CD4-positive, alpha-beta T cell (primary cell): ENCODE measurements at regions of chr3 and their contacts with region 1.

Region 1: GRCh38 chr3:152356870-152357276 is 88.1 kb downstream of the MBNL1 start:
- DNase-seq: peak in 1 of 14 experiments; percentile 35
- ATAC-seq: peak; percentile 50
- H3K4me3 ChIP-seq: no peak overlapping the region
- H3K4me3 Mint-ChIP-seq: peak overlapping the region; percentile 18
- H3K27ac ChIP-seq: no peak overlapping the region
- H3K27ac Mint-ChIP-seq: peak overlapping the region; percentile 45
- H3K4me1 ChIP-seq: peaks cover 30% of the 10 kb centered on the region
- H3K4me1 Mint-ChIP-seq: peaks cover 85% of the 10 kb centered on the region
- H3K27me3 ChIP-seq: no peaks in the 10 kb centered on the region
- H3K27me3 Mint-ChIP-seq: no peaks in the 10 kb centered on the region
- CTCF ChIP-seq: no peak

Region 2: DNA sequence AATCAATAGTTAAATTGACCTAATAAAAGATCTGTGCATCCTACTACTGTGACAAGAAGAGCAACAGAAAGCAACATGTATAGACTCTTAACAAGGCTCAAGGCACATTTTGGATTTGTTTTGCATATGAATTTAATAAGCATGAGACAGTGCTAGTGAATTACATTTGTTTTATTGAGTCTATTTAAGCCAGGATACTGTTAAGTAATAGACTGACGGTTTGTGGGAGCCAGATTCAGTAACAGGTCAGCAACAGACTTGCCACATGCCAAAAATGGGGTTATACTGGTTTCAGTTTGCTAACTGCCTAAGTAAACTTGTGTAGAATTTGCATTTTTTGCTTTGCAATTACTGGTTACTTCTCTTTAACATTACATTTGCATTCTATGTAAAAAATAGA is 34.1 kb before region 1 on chr3:
- CTCF ChIA-PET with region 1: no interaction called
- POLR2A ChIA-PET with region 1: no interaction called
- intact Hi-C with region 1: no loop called
- DNase-seq: peak in 3 of 14 experiments; percentile 43 to 65 (median 44)
- ATAC-seq: no peak
- H3K4me3 ChIP-seq: no peak overlapping the region
- H3K4me3 Mint-ChIP-seq: peak overlapping the region; percentile 62
- H3K27ac ChIP-seq: peak overlapping the region in 1 of 2 donors; percentile 20
- H3K27ac Mint-ChIP-seq: peak overlapping the region; percentile 91
- H3K4me1 ChIP-seq: peaks cover 9% of the 10 kb centered on the region
- H3K4me1 Mint-ChIP-seq: peaks cover 90% of the 10 kb centered on the region
- H3K27me3 ChIP-seq: no peaks in the 10 kb centered on the region
- H3K27me3 Mint-ChIP-seq: no peaks in the 10 kb centered on the region
- CTCF ChIP-seq: no peak

Region 3: GRCh38 chr3:152376351-152377183 is 19.7 kb after region 1 on chr3:
- CTCF ChIA-PET with region 1: interaction called, 3 read pairs
- POLR2A ChIA-PET with region 1: interaction called, 7 read pairs
- intact Hi-C with region 1: loop called in 1 of 2 experiments (anchors 1 kb)
- DNase-seq: peak in 3 of 14 experiments; percentile 28 to 65 (median 53)
- ATAC-seq: no peak
- H3K4me3 ChIP-seq: no peak overlapping the region
- H3K4me3 Mint-ChIP-seq: peak overlapping the region; percentile 36
- H3K27ac ChIP-seq: no peak overlapping the region
- H3K27ac Mint-ChIP-seq: peak overlapping the region; percentile 84
- H3K4me1 ChIP-seq: peaks cover 41% of the 10 kb centered on the region
- H3K4me1 Mint-ChIP-seq: peaks cover 95% of the 10 kb centered on the region
- H3K27me3 ChIP-seq: no peaks in the 10 kb centered on the region
- H3K27me3 Mint-ChIP-seq: no peaks in the 10 kb centered on the region
- CTCF ChIP-seq: no peak

Region 4: GRCh38 chr3:152402695-152403451 is 46.0 kb after region 1 on chr3:
- CTCF ChIA-PET with region 1: interaction called, 3 read pairs
- POLR2A ChIA-PET with region 1: interaction called, 4 read pairs
- intact Hi-C with region 1: loop called in 1 of 2 experiments (anchors 5 kb)
- DNase-seq: peak in 5 of 14 experiments; percentile 11 to 79 (median 22)
- ATAC-seq: peak; percentile 86
- H3K4me3 ChIP-seq: no peak overlapping the region
- H3K4me3 Mint-ChIP-seq: peak overlapping the region; percentile 55
- H3K27ac ChIP-seq: peak overlapping the region; percentile 51 to 56
- H3K27ac Mint-ChIP-seq: peak overlapping the region; percentile 91
- H3K4me1 ChIP-seq: peaks cover 27% of the 10 kb centered on the region
- H3K4me1 Mint-ChIP-seq: peaks cover 96% of the 10 kb centered on the region
- H3K27me3 ChIP-seq: no peaks in the 10 kb centered on the region
- H3K27me3 Mint-ChIP-seq: no peaks in the 10 kb centered on the region
- CTCF ChIP-seq: no peak

Region 5: GRCh38 chr3:152413240-152413639 is 56.4 kb after region 1 on chr3:
- CTCF ChIA-PET with region 1: no interaction called
- POLR2A ChIA-PET with region 1: no interaction called
- intact Hi-C with region 1: no loop called
- DNase-seq: no peak
- ATAC-seq: no peak
- H3K4me3 ChIP-seq: no peak overlapping the region
- H3K4me3 Mint-ChIP-seq: no peak overlapping the region
- H3K27ac ChIP-seq: no peak overlapping the region
- H3K27ac Mint-ChIP-seq: peak overlapping the region; percentile 75
- H3K4me1 ChIP-seq: peaks cover 7% of the 10 kb centered on the region
- H3K4me1 Mint-ChIP-seq: peaks cover 76% of the 10 kb centered on the region
- H3K27me3 ChIP-seq: no peaks in the 10 kb centered on the region
- H3K27me3 Mint-ChIP-seq: no peaks in the 10 kb centered on the region
- CTCF ChIP-seq: no peak